CD8-positive, alpha-beta memory T cell (primary cell): ENCODE measurements at regions of chr16 and their contacts with region 1.

Region 1: DNA sequence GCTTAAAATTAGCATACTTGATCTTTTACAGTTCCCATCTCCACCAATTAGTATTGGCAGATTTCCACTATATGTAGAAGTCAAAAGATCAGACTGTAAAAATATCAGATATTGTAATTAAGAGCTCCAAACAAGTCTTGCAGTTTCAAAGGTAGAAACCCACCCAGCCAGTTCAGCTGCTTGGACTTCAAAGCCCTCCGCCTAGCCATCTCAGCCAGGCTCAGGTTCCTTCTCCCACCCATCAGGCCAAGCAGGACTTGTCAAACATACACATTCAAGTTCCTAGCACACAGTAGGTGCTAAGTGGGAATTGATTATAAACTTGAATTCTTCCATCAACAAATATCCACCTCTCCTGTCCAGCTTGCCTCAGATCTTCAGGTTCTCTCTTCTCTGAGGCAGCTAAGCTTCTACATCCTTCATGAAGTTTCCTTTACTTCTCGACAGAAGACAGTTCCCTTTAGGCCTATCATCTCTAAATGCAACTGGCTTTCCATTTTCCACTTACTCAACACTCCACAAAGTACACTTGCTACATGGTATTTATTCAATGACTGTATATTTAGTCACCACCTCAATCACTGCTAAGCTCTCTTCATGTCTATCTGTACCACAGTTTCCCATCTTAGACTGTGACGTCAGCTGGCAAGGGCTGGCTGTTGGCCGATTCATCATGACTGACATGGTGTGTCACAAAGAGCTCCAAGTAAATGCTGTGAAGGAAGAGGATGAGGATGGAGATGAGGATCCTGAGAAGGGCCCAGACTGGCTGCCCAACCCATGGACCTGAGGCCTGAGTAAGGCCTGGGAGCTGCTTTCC is 13.3 kb upstream of the COG7 start:
- DNase-seq: no peak
- H3K4me3 ChIP-seq: no peak overlapping the region
- H3K4me3 Mint-ChIP-seq: peak overlapping the region in 1 of 7 donors; percentile 14
- H3K27ac ChIP-seq: no peak overlapping the region
- H3K27ac Mint-ChIP-seq: peak overlapping the region in 2 of 8 donors; percentile 25 to 63
- H3K4me1 ChIP-seq: no peaks in the 10 kb centered on the region
- H3K4me1 Mint-ChIP-seq: peaks cover 0 to 3% (median 0%) of the 10 kb centered on the region in 3 donors
- H3K27me3 ChIP-seq: no peaks in the 10 kb centered on the region
- H3K27me3 Mint-ChIP-seq: no peaks in the 10 kb centered on the region

Region 2: GRCh38 chr16:23535901-23536300 is 69.6 kb after region 1 on chr16:
- CTCF ChIA-PET with region 1: no interaction called
- POLR2A ChIA-PET with region 1: interaction called, 13 read pairs
- DNase-seq: no peak
- H3K4me3 ChIP-seq: no peak overlapping the region
- H3K4me3 Mint-ChIP-seq: no peak overlapping the region
- H3K27ac ChIP-seq: no peak overlapping the region
- H3K27ac Mint-ChIP-seq: peak overlapping the region in 1 of 8 donors; percentile 69
- H3K4me1 ChIP-seq: no peaks in the 10 kb centered on the region
- H3K4me1 Mint-ChIP-seq: no peaks in the 10 kb centered on the region
- H3K27me3 ChIP-seq: no peaks in the 10 kb centered on the region
- H3K27me3 Mint-ChIP-seq: no peaks in the 10 kb centered on the region

Region 3: DNA sequence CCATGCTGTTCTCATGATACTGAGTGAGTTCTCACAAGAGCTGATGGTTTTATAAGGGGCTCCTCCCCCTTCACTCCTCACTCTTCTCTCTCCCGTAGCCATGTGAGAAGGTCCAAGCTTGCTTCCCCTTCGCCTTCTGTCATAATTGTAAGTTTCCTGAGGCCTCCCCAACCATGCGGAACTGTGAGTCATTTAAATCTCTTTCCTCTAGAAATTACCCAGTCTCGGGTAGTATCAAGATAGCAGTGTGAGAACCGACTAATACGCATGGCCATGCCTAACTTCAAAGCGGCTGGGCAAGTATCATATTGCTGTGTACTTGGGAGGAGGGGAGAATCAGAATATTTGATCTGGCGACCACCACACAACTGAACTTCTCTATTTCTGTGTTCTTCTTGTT is 457.9 kb after region 1 on chr16:
- CTCF ChIA-PET with region 1: no interaction called
- POLR2A ChIA-PET with region 1: no interaction called
- DNase-seq: no peak
- H3K4me3 ChIP-seq: no peak overlapping the region
- H3K4me3 Mint-ChIP-seq: peak overlapping the region in 1 of 7 donors; percentile 18
- H3K27ac ChIP-seq: no peak overlapping the region
- H3K27ac Mint-ChIP-seq: peak overlapping the region in 3 of 8 donors; percentile 41 to 71 (median 54)
- H3K4me1 ChIP-seq: peaks cover 11% of the 10 kb centered on the region
- H3K4me1 Mint-ChIP-seq: peaks cover 59 to 90% (median 83%) of the 10 kb centered on the region in 3 donors
- H3K27me3 ChIP-seq: no peaks in the 10 kb centered on the region
- H3K27me3 Mint-ChIP-seq: no peaks in the 10 kb centered on the region